Common myeloid progenitor, CD34-positive (primary cell): ENCODE measurements at regions of chr2 and their contacts with region 1.

Region 1: DNA sequence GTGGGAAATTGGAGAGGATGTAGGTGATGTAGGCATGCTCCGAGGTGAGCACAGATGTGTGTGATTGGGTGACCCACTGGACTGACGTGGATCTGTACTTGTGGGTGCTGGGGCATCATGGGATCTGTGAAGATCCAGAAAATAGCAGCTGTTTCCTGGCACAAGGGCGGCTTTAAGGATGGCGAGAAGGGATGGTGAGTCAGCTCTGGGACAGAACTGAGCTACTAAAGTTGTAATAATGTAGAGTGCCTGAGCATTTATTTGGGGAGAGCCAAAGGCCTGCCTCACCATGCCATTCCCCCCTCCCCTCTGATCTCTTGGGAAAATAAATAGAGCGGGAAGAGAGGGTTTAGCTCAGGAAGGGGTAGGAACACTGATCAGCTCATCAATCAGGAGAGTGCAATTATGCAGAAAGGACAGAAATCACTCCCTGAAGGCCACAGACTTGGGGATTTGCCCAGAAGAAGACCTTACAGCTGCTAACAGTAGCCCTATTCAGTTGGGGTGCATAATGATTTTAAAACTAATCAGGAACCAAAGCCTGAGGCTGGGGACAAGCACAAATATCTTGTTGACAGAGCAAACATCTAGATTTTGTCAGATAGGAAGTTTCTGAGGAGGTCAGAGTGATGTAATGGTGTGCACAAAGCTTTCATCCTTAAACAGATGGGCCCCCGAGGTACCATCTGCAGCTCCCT is 30.3 kb downstream of the TANC1 start:
- DNase-seq: peak in 1 of 3 donors; percentile 22
- H3K4me3 ChIP-seq: no peak overlapping the region
- H3K27ac ChIP-seq: no peak overlapping the region
- H3K4me1 ChIP-seq: peaks cover 7 to 33% (median 19%) of the 10 kb centered on the region in 4 experiments
- H3K27me3 ChIP-seq: no peaks in the 10 kb centered on the region

Region 2: DNA sequence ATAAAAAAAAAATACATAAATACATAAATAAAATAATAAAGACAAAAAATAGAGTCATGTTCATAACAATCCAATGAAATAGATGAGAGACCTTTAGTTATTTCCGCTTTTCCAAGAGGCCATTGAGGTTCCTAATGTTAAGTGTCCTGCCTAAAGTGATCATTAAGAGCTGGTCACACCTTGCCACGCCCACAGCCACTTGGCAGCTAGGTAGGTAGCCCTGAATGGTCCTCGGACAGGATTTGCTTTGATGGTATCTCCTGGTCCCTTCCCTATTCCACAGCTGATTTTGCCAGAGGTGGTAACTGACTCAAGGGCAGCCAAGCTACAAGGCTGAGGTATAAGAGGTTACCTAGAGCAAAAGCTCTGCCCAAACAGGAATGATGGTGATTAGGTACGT is 54.7 kb before region 1 on chr2:
- CTCF ChIA-PET with region 1: no interaction called
- POLR2A ChIA-PET with region 1: no interaction called
- DNase-seq: no peak
- H3K4me3 ChIP-seq: no peak overlapping the region
- H3K27ac ChIP-seq: no peak overlapping the region
- H3K4me1 ChIP-seq: no peaks in the 10 kb centered on the region
- H3K27me3 ChIP-seq: no peaks in the 10 kb centered on the region

Region 3: DNA sequence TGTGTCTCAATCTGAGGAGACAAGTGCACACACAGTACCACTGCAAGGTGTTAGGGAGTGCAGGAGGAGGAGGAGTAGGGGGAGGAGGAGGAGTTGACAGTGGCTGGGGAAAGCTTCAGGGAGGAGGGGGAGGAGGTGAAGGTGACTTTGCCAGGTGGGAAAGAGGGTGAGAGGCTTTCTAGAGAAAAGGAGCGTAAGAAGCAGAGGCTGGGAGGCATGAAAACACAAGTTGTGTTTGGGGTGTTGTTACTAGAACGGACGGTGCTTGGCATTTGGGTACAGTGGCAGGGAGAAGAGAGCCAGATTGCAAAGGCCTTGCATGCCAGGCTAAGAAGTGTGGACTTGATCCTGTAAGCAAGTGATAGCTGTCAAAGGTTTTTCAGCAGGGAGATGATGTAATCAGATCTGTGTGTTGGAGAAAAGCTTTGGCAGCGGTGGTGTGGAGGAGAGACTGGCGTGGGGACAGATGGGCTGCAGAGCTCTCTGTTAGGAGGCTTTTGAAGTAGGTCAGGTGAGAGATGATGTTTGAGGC is 14.0 kb before region 1 on chr2:
- CTCF ChIA-PET with region 1: interaction called, 24 read pairs
- POLR2A ChIA-PET with region 1: no interaction called
- DNase-seq: no peak
- H3K4me3 ChIP-seq: no peak overlapping the region
- H3K27ac ChIP-seq: no peak overlapping the region
- H3K4me1 ChIP-seq: no peaks in the 10 kb centered on the region
- H3K27me3 ChIP-seq: no peaks in the 10 kb centered on the region